ENCODE measurements at regions of chr6 and their contacts with region 1.

Region 1: GRCh38 chr6:63635588-63636517 is at the start of gene PHF3:
- DNase-seq: peak; percentile 97
- H3K4me3 ChIP-seq: peak within 1 kb of the TSS; percentile 73 to 99 (median 90)
- H3K27ac ChIP-seq: peak within 1 kb of the TSS; percentile 83 to 99 (median 97)
- H3K4me1 ChIP-seq: peaks cover 40 to 54% (median 47%) of the 10 kb centered on the region in 6 donors
- H3K27me3 ChIP-seq: no peaks in the 10 kb centered on the region
- CTCF ChIP-seq: peak in 4 of 11 experiments; percentile 9 to 43 (median 21)
- POLR2A ChIP-seq: peak in 2 of 3 donors; percentile 16 to 62
- total RNA-seq, gene PHF3: 66.5 to 111 (median 77.1) TPM

Region 2: GRCh38 chr6:63571881-63572732 is 63.7 kb before region 1 on chr6 and contains the starts of genes LOC128125822 and PTP4A1:
- intact Hi-C with region 1: loop called (anchors 10 kb)
- DNase-seq: peak; percentile 100
- H3K4me3 ChIP-seq: peak within 1 kb of the TSS; percentile 59 to 93 (median 74)
- H3K27ac ChIP-seq: peak within 1 kb of the TSS; percentile 94 to 100 (median 100)
- H3K4me1 ChIP-seq: peaks cover 9 to 40% (median 26%) of the 10 kb centered on the region in 6 donors
- H3K27me3 ChIP-seq: no peaks in the 10 kb centered on the region
- CTCF ChIP-seq: peak in 2 of 11 experiments; percentile 4 to 29
- POLR2A ChIP-seq: peak; percentile 87 to 99 (median 87)
- total RNA-seq, gene PTP4A1: 26.6 to 46.1 (median 29.7) TPM

Measured in spleen (tissue), 13 donors.